ENCODE measurements at regions of chr5 and their contacts with region 1.

Region 1: DNA sequence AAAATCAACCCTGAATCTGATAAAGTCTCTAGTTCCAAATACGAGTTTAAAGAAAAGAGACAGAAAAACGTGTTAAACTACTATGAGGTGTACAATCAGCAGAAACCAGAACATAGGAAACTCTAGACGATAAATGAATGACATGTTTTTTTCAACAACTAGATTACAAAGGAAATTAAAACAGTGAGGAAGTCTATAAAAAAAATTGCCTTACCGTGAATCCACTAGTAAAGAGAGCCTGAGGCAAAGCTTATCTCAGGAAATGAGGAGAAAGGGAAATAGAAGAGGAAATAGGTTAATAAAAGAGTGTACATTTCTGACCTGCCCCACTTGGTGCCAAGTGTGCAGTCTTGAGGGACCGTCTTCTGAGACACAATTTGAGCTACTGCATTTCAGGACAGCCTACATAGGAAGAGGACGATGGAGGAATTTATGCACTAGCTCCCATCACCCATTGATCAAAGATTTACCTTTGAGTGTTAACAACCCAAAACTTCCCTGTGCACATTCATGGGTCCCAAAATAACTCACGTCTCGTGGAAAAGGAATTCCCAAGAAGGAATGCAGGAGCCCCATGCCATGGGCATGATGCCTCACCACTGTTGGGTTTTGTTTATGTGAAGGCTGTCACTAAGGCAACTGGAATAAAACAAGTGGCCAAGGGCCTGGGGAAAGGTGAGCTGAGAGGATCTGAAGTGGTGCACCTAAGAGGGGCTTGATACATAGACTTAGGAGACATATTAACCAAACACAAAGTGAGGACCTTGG is 53.6 kb upstream of the SLC1A3 start:
- DNase-seq: no peak
- ATAC-seq: peak; percentile 44; the same call in 1 of the 2 replicates
- H3K4me3 ChIP-seq: no peak overlapping the region
- H3K27ac ChIP-seq: no peak overlapping the region
- H3K4me1 ChIP-seq: peaks cover 0 to 8% of the 10 kb centered on the region in 2 experiments; a peak in 1 of 4 replicates
- H3K27me3 ChIP-seq: no peaks in the 10 kb centered on the region
- CTCF ChIP-seq: no peak
- POLR2A ChIP-seq: no peak
- RAD21 ChIP-seq: no peak

Region 2: GRCh38 chr5:36323926-36324781 is 228.7 kb before region 1 on chr5:
- CTCF ChIA-PET with region 1: no interaction called
- POLR2A ChIA-PET with region 1: no interaction called
- RAD21 ChIA-PET with region 1: no interaction called
- intact Hi-C with region 1: no loop called
- DNase-seq: no peak
- ATAC-seq: no peak
- H3K4me3 ChIP-seq: no peak overlapping the region
- H3K27ac ChIP-seq: no peak overlapping the region
- H3K4me1 ChIP-seq: no peaks in the 10 kb centered on the region
- H3K27me3 ChIP-seq: no peaks in the 10 kb centered on the region
- CTCF ChIP-seq: no peak
- POLR2A ChIP-seq: no peak
- RAD21 ChIP-seq: no peak

Region 3: DNA sequence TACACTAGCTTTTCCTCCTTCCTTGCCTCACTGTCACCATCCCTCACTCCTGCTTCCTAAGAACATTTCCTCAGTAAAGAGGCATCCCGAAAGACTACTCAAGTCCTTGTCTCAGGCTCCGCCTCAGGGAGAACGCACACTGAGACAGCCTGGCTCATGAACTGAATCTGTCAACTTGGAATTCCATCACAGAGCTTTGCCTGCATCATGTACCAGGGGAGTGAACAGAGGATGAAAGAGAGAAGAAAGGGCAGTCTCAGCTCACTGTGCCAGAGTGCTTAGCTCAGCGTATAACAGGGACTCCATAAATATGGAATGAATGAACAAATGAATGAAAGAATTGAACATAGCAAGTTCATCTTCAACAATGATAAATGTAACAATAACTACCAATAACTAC is 15.1 kb before region 1 on chr5:
- CTCF ChIA-PET with region 1: no interaction called
- POLR2A ChIA-PET with region 1: no interaction called
- RAD21 ChIA-PET with region 1: no interaction called
- intact Hi-C with region 1: no loop called
- DNase-seq: no peak
- ATAC-seq: no peak
- H3K4me3 ChIP-seq: no peak overlapping the region
- H3K27ac ChIP-seq: no peak overlapping the region
- H3K4me1 ChIP-seq: no peaks in the 10 kb centered on the region
- H3K27me3 ChIP-seq: no peaks in the 10 kb centered on the region
- CTCF ChIP-seq: no peak
- POLR2A ChIP-seq: no peak
- RAD21 ChIP-seq: no peak

Region 4: GRCh38 chr5:36801521-36801920 is 248.7 kb after region 1 on chr5:
- CTCF ChIA-PET with region 1: no interaction called
- POLR2A ChIA-PET with region 1: no interaction called
- RAD21 ChIA-PET with region 1: no interaction called
- intact Hi-C with region 1: loop called (anchors 10 kb)
- DNase-seq: no peak
- ATAC-seq: no peak
- H3K4me3 ChIP-seq: no peak overlapping the region
- H3K27ac ChIP-seq: no peak overlapping the region
- H3K4me1 ChIP-seq: no peaks in the 10 kb centered on the region
- H3K27me3 ChIP-seq: no peaks in the 10 kb centered on the region
- CTCF ChIP-seq: no peak
- POLR2A ChIP-seq: no peak
- RAD21 ChIP-seq: no peak

Measured in HCT116 (cell line).